AG04450 (cell line): ENCODE measurements at regions of chr10 and their contacts with region 1.

Region 1: GRCh38 chr10:44857363-44858016 is 53.6 kb upstream of the TMEM72 start:
- DNase-seq: peak; percentile 54
- H3K4me3 ChIP-seq: no peak overlapping the region
- H3K27ac ChIP-seq: no peak overlapping the region
- H3K27me3 ChIP-seq: no peaks in the 10 kb centered on the region
- CTCF ChIP-seq: peak; percentile 100

Region 2: GRCh38 chr10:44203535-44203934 is 654.0 kb before region 1 on chr10:
- CTCF ChIA-PET with region 1: interaction called, 12 read pairs
- POLR2A ChIA-PET with region 1: no interaction called
- DNase-seq: no peak
- H3K4me3 ChIP-seq: no peak overlapping the region
- H3K27ac ChIP-seq: no peak overlapping the region
- H3K27me3 ChIP-seq: peaks cover 4% of the 10 kb centered on the region
- CTCF ChIP-seq: no peak

Region 3: GRCh38 chr10:44733501-44734488 is 123.7 kb before region 1 on chr10:
- CTCF ChIA-PET with region 1: interaction called, 24 read pairs
- POLR2A ChIA-PET with region 1: no interaction called
- DNase-seq: no peak
- H3K4me3 ChIP-seq: no peak overlapping the region
- H3K27ac ChIP-seq: no peak overlapping the region
- H3K27me3 ChIP-seq: no peaks in the 10 kb centered on the region
- CTCF ChIP-seq: peak; percentile 66